Caco-2 (cell line): ENCODE measurements at regions of chr19 and their contacts with region 1.

Region 1: DNA sequence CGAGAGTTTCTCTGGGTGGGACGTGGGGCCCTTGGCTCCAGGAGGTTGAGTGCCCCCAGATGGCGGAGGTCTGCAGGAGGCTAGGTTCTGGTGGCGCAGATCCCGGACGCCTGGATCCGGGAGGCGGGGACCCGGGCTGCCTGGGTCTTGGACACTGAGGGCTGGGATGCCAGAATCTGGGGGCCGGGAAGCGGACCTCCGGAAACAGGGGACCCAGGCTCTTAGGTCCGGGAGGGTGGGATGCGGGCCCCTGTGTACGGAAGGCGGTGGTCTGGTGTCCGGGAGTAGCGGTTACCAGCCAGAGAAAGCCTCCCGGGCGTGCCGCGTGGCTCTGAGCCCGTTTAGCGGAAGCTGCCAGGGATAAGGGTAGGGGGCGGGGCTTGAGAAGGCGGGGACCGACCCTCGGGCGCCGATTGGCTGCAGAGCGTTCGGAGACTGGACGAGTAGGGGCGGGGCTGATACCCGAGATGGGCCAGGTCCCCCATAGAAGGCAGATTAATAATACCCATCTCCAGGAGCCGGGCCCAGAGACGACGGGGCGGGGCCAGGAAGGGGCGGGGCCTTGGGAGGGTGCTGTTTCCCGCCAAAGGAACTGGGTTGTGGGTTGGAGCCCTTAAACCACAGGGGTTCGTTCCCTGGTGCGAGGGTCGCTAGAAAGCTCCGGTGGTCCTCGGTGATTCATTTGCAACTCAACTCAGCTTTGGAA is at the start of gene SLC1A5:
- DNase-seq: peak; percentile 99
- H3K4me3 ChIP-seq: peak within 1 kb of the TSS; percentile 84
- H3K4me3 Mint-ChIP-seq: peak within 1 kb of the TSS; percentile 99
- H3K27ac Mint-ChIP-seq: peak within 1 kb of the TSS; percentile 99
- H3K4me1 ChIP-seq: peaks cover 34% of the 10 kb centered on the region
- H3K4me1 Mint-ChIP-seq: peaks cover 42% of the 10 kb centered on the region
- H3K27me3 ChIP-seq: no peaks in the 10 kb centered on the region
- H3K27me3 Mint-ChIP-seq: no peaks in the 10 kb centered on the region
- CTCF ChIP-seq: no peak
- total RNA-seq, gene SLC1A5: 497 and 512 TPM in 2 replicates

Region 2: DNA sequence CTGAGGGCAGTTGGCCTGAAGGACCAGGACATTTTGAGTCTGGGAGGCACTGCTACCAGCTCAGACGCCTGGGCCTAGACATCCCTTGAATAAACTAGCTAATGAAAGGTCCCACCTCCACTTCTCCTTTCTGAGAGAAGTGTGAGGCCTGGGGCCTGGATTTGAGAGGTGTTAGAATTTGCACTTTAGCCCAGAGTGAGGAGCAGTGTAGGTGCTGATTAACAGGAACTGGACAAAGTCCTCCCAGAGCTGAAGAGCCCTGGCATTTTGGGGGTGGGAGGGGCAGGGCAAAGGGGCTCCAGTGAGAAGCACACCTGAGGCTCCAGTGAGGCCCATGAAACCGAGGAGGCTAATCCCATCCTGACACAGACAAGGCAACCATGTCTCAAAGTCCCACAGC is 15.1 kb after region 1 on chr19:
- CTCF ChIA-PET with region 1: interaction called, 4 read pairs
- POLR2A ChIA-PET with region 1: interaction called, 12 read pairs
- intact Hi-C with region 1: loop called (anchors 1 kb)
- DNase-seq: peak; percentile 59 to 91
- H3K4me3 ChIP-seq: no peak overlapping the region
- H3K4me3 Mint-ChIP-seq: no peak overlapping the region
- H3K27ac Mint-ChIP-seq: peak overlapping the region; percentile 56
- H3K4me1 ChIP-seq: peaks cover 36% of the 10 kb centered on the region
- H3K4me1 Mint-ChIP-seq: no peaks in the 10 kb centered on the region
- H3K27me3 ChIP-seq: no peaks in the 10 kb centered on the region
- H3K27me3 Mint-ChIP-seq: no peaks in the 10 kb centered on the region
- CTCF ChIP-seq: no peak

Region 3: DNA sequence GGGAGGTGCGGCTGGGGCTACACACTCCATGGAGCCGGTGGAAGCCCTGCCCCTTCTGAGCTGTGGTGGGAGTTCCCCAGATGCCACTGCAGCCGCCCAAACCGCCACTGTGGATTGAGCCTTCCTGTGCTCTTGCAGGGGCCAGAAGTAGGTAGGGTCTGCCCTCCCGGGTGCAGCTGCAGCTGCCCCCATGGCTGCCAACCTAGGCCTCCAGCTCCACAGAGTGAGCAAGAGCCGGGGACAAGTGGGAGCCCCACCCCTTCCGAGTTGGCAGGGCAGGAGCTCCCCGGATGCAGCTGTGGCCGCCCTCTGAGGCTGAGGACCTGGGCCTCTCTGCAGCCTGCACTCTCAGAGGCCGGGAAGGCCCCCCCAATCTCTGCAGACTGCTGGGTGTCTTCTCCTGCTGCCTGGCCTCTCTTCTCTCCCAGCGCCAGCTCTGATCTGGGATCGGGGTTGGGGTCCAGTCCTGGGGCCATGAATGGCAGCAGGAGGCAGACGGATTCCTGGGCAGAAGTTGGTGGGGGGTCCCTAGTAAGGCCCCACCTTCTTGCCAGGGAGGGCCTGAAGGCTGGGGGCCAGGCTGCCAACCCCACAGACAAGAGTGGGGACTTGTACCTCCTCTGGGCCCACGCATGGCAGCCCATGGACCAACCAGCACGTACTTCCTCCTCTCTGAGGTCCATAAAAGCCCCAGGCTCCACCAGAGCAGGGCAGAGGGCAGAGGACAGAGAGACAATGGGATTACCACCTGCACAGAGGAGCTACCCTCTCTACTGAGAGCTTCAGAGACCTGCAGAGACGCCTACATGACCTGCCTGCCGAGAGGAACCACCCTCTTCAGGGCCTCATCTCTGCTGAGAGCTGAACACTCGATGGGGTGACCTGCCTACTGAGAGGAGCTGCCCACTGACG is 33.3 kb after region 1 on chr19:
- CTCF ChIA-PET with region 1: no interaction called
- POLR2A ChIA-PET with region 1: interaction called, 4 read pairs
- intact Hi-C with region 1: loop called (anchors 2 kb)
- DNase-seq: no peak
- H3K4me3 ChIP-seq: no peak overlapping the region
- H3K4me3 Mint-ChIP-seq: no peak overlapping the region
- H3K27ac Mint-ChIP-seq: no peak overlapping the region
- H3K4me1 ChIP-seq: peaks cover 16% of the 10 kb centered on the region
- H3K4me1 Mint-ChIP-seq: peaks cover 13% of the 10 kb centered on the region
- H3K27me3 ChIP-seq: no peaks in the 10 kb centered on the region
- H3K27me3 Mint-ChIP-seq: no peaks in the 10 kb centered on the region
- CTCF ChIP-seq: no peak

Region 4: DNA sequence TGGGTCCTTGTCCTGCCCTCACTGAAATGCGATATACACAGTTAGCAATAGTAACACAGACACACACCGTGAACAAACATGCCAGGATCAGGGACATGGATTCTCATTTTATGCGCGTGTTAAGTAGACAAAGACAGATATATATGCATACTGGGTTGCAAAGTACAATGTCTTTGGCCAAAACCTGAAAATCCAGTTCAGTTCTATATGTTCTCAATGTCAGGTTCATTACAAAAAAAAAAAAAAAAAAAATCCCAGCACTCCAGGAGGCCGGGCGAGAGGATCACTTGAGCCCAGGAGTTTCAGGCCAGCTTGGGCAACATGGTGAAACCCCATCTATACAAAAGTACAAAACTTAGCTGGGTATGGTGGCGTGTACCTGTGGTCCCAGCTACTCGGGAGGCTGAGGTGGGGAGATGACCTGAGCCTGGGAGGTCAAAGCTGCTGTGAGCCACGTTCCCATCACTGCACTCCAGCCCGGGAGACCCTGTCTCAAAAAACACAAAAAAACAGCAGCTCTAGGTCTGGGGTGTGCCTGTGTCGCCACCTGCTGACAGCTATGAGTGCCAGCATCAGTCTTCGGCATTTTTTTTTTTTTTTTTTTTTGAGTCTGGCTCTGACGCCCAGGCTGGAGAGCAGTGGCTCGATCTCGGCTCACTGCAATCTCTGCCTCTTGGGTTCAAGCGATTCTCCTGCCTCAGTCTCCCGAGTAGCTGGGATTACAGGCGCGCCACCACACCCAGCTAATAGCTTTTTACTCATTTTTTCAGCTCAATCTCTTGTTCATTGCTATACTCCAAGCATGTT is 51.9 kb after region 1 on chr19:
- CTCF ChIA-PET with region 1: interaction called, 9 read pairs
- POLR2A ChIA-PET with region 1: interaction called, 10 read pairs
- intact Hi-C with region 1: no loop called
- DNase-seq: peak; percentile 68 to 69
- H3K4me3 ChIP-seq: no peak overlapping the region
- H3K4me3 Mint-ChIP-seq: no peak overlapping the region
- H3K27ac Mint-ChIP-seq: peak overlapping the region; percentile 45
- H3K4me1 ChIP-seq: peaks cover 17% of the 10 kb centered on the region
- H3K4me1 Mint-ChIP-seq: peaks cover 26% of the 10 kb centered on the region
- H3K27me3 ChIP-seq: no peaks in the 10 kb centered on the region
- H3K27me3 Mint-ChIP-seq: no peaks in the 10 kb centered on the region
- CTCF ChIP-seq: peak; percentile 91 to 94

Region 5: GRCh38 chr19:46850228-46851203 is 62.1 kb after region 1 on chr19 and contains the start of gene AP2S1:
- CTCF ChIA-PET with region 1: no interaction called
- POLR2A ChIA-PET with region 1: interaction called, 7 read pairs
- intact Hi-C with region 1: loop called (anchors 2 kb)
- DNase-seq: peak; percentile 98 to 99
- H3K4me3 ChIP-seq: peak within 1 kb of the TSS; percentile 69
- H3K4me3 Mint-ChIP-seq: peak within 1 kb of the TSS; percentile 96
- H3K27ac Mint-ChIP-seq: peak within 1 kb of the TSS; percentile 94
- H3K4me1 ChIP-seq: peaks cover 8% of the 10 kb centered on the region; the same call in 1 of the 2 replicates
- H3K4me1 Mint-ChIP-seq: peaks cover 28% of the 10 kb centered on the region
- H3K27me3 ChIP-seq: no peaks in the 10 kb centered on the region
- H3K27me3 Mint-ChIP-seq: no peaks in the 10 kb centered on the region
- CTCF ChIP-seq: no peak
- total RNA-seq, gene AP2S1: 211 and 234 TPM in 2 replicates